CD8-positive, alpha-beta T cell (primary cell): ENCODE measurements at regions of chr6 and their contacts with region 1.

Region 1: DNA sequence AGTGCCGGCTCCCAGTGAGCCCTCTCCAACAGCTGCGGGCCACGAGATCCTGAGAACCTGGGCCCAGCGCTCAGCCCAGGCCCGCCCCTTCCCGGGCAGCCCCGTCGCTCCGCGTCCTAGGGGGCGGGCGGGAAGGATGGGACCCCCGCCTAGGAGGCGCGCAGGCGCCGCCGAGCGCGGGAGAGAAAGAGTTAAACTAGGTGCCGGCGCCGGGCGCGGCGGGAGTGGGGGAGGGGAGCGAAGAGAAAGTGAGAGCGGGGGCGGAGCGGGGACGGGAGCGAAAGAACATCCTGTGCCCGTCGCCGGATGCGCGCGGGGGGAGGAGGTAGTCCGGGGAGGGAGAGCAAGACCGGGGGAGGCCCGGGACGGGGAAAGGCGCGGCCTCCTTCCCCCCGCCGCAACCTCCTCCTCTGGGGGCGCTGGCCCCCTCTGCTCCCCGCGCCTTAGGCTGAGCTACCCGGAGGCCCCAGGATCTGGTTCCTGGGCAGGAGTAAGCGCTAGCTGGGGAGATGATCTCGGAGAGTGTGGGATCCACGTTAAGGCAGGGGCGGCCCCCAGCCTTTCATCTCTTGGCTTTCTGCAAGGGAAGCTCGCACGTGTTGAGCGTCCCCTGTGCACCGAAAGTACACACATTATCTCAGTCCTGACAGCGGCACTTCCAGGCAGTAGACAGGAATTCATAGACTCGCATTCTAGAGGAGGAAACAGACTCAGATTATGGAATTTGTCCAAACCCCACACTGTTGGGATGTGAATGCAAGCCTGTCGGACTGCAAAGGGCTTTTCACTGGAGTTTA is 4.9 kb upstream of the ARMC12 start:
- DNase-seq: peak; percentile 86 to 98 (median 95)
- ATAC-seq: peak; percentile 55
- H3K4me3 ChIP-seq: peak overlapping the region; percentile 70 to 91
- H3K4me3 Mint-ChIP-seq: peak overlapping the region; percentile 91
- H3K27ac ChIP-seq: peak overlapping the region; percentile 91 to 95
- H3K27ac Mint-ChIP-seq: peak overlapping the region; percentile 89
- H3K4me1 ChIP-seq: peaks cover 87% of the 10 kb centered on the region
- H3K4me1 Mint-ChIP-seq: peaks cover 80% of the 10 kb centered on the region
- H3K27me3 ChIP-seq: no peaks in the 10 kb centered on the region
- H3K27me3 Mint-ChIP-seq: no peaks in the 10 kb centered on the region
- CTCF ChIP-seq: peak; percentile 17

Region 2: DNA sequence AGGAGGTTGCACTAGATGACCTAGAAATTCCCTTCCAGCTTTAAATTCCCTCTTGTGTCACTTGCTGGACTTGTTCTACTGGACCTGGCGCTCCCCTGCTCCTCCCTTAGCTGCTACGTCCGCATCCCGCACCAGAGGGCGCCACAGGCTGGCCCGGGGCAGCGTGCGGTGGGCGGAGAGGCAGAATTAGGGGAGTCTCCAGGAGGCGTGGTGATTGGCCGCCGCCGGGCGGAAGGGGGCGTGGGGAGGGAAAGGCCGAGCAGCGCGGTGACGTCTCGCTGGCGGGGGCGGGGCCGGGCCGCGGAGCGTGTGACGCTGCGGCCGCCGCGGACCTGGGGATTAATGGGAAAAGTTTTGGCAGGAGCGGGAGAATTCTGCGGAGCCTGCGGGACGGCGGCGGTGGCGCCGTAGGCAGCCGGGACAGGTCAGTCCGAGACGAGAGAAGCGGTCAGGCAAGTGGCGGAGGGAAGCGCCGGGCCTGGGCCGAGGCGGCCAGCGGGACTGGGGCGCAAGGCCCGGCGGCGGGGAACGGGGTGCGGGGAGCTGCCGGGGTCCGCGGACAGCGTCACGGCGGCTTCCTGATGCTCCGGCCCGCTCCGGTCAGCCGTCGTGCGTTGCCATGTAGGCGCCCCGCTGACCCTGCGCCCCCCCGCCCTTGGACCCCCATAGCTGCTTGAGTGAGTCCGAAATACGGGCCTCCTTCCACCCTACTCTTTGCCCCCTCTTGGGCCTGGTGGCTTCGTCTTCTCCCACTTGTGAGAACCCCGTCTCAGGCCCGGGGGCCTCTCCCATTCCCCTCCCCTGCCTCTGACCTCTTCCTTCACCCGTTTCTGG is 389.5 kb before region 1 on chr6 and contains the start of gene PPARD:
- CTCF ChIA-PET with region 1: interaction called, 17 read pairs
- POLR2A ChIA-PET with region 1: no interaction called
- intact Hi-C with region 1: loop called (anchors 2 kb)
- DNase-seq: peak; percentile 93 to 99 (median 97)
- ATAC-seq: peak; percentile 99
- H3K4me3 ChIP-seq: peak within 1 kb of the TSS; percentile 52 to 57
- H3K4me3 Mint-ChIP-seq: peak within 1 kb of the TSS; percentile 87
- H3K27ac ChIP-seq: peak within 1 kb of the TSS; percentile 75 to 81
- H3K27ac Mint-ChIP-seq: peak within 1 kb of the TSS; percentile 94
- H3K4me1 ChIP-seq: peaks cover 43% of the 10 kb centered on the region
- H3K4me1 Mint-ChIP-seq: peaks cover 50% of the 10 kb centered on the region
- H3K27me3 ChIP-seq: no peaks in the 10 kb centered on the region
- H3K27me3 Mint-ChIP-seq: no peaks in the 10 kb centered on the region
- CTCF ChIP-seq: peak; percentile 90
- total RNA-seq, gene PPARD: 20.0 to 21.5 TPM

Region 3: DNA sequence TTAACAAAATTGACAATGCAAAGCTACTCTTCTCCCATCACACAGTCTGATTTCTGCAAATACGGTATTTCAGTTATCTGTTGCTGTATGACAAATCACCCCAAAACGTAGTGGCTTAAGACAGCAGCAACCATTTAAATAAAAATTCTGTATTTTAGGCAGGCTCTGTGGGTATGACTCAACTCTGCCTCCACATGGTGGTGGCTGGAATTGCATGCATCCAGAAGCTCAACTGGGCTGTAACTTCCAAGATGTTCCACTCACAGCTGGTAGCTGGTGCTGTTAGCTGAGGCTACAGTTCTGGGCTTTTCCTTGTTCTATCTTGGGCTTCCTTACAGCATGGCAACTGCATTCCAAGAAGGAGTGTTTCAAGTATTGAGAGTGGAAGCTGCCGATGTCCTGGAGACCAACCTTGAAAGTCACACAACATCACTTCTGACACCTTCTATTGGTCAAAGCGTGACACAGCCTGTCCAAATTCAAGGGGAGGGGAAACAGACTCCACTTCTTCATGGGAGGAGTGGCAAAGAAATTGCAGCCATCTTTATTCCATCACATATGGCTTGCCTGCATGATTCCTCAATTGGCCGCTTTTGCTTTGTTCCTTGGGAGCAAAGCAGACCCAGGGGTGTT is 179.5 kb before region 1 on chr6:
- CTCF ChIA-PET with region 1: interaction called, 12 read pairs
- POLR2A ChIA-PET with region 1: interaction called, 4 read pairs
- intact Hi-C with region 1: no loop called
- DNase-seq: peak; percentile 31 to 78 (median 61)
- ATAC-seq: peak; percentile 86
- H3K4me3 ChIP-seq: no peak overlapping the region
- H3K4me3 Mint-ChIP-seq: no peak overlapping the region
- H3K27ac ChIP-seq: no peak overlapping the region
- H3K27ac Mint-ChIP-seq: no peak overlapping the region
- H3K4me1 ChIP-seq: no peaks in the 10 kb centered on the region
- H3K4me1 Mint-ChIP-seq: peaks cover 4% of the 10 kb centered on the region
- H3K27me3 ChIP-seq: no peaks in the 10 kb centered on the region
- H3K27me3 Mint-ChIP-seq: peaks cover 2% of the 10 kb centered on the region
- CTCF ChIP-seq: peak; percentile 95

Region 4: GRCh38 chr6:35590622-35591066 is 141.3 kb before region 1 on chr6:
- CTCF ChIA-PET with region 1: interaction called, 152 read pairs
- POLR2A ChIA-PET with region 1: interaction called, 11 read pairs
- intact Hi-C with region 1: no loop called
- DNase-seq: no peak
- ATAC-seq: no peak
- H3K4me3 ChIP-seq: no peak overlapping the region
- H3K4me3 Mint-ChIP-seq: no peak overlapping the region
- H3K27ac ChIP-seq: peak overlapping the region in 1 of 2 experiments; percentile 46
- H3K27ac Mint-ChIP-seq: peak overlapping the region; percentile 94
- H3K4me1 ChIP-seq: peaks cover 86% of the 10 kb centered on the region
- H3K4me1 Mint-ChIP-seq: peaks cover 92% of the 10 kb centered on the region
- H3K27me3 ChIP-seq: no peaks in the 10 kb centered on the region
- H3K27me3 Mint-ChIP-seq: no peaks in the 10 kb centered on the region
- CTCF ChIP-seq: no peak

Region 5: GRCh38 chr6:35634316-35634715 is 97.6 kb before region 1 on chr6:
- CTCF ChIA-PET with region 1: interaction called, 341 read pairs
- POLR2A ChIA-PET with region 1: interaction called, 3 read pairs
- intact Hi-C with region 1: loop called in 1 of 2 experiments (anchors 2 kb)
- DNase-seq: no peak
- ATAC-seq: no peak
- H3K4me3 ChIP-seq: no peak overlapping the region
- H3K4me3 Mint-ChIP-seq: no peak overlapping the region
- H3K27ac ChIP-seq: no peak overlapping the region
- H3K27ac Mint-ChIP-seq: peak overlapping the region; percentile 85
- H3K4me1 ChIP-seq: no peaks in the 10 kb centered on the region
- H3K4me1 Mint-ChIP-seq: peaks cover 36% of the 10 kb centered on the region
- H3K27me3 ChIP-seq: no peaks in the 10 kb centered on the region
- H3K27me3 Mint-ChIP-seq: no peaks in the 10 kb centered on the region
- CTCF ChIP-seq: no peak

Region 6: DNA sequence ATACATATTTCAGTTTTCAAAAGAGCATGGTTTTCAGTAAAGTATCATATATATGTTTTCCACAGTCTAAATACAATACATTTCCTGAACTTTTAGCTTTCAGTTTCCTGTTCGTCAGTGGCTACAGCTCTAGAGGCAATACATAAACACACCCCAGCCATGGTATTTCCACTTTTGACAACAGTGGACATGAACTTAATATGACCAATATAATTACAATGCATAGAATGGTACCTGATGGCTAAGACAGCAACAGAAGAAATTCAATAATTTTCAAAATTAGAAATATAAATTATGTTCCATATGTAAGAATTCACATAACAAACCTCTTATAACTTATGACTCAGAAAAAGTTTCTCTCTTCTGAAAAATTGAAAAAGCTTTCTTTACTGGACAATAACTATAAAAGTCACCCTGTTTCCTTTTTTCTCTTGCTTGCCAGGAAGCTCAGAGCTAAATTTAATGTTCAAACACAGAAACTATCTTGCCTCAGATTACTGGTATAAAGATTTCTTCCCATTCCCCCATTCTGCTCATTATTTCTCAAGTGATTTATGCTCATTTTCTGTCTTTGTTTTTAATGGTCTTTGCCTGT is 62.4 kb before region 1 on chr6:
- CTCF ChIA-PET with region 1: interaction called, 21 read pairs
- POLR2A ChIA-PET with region 1: interaction called, 9 read pairs
- intact Hi-C with region 1: loop called in 1 of 2 experiments (anchors 5 kb)
- DNase-seq: peak in 2 of 9 experiments; percentile 37 to 64
- ATAC-seq: peak; percentile 63
- H3K4me3 ChIP-seq: peak overlapping the region; percentile 21 to 26
- H3K4me3 Mint-ChIP-seq: peak overlapping the region; percentile 73
- H3K27ac ChIP-seq: peak overlapping the region; percentile 17 to 62
- H3K27ac Mint-ChIP-seq: peak overlapping the region; percentile 89
- H3K4me1 ChIP-seq: peaks cover 73% of the 10 kb centered on the region
- H3K4me1 Mint-ChIP-seq: peaks cover 50% of the 10 kb centered on the region
- H3K27me3 ChIP-seq: no peaks in the 10 kb centered on the region
- H3K27me3 Mint-ChIP-seq: no peaks in the 10 kb centered on the region
- CTCF ChIP-seq: no peak

Region 7: DNA sequence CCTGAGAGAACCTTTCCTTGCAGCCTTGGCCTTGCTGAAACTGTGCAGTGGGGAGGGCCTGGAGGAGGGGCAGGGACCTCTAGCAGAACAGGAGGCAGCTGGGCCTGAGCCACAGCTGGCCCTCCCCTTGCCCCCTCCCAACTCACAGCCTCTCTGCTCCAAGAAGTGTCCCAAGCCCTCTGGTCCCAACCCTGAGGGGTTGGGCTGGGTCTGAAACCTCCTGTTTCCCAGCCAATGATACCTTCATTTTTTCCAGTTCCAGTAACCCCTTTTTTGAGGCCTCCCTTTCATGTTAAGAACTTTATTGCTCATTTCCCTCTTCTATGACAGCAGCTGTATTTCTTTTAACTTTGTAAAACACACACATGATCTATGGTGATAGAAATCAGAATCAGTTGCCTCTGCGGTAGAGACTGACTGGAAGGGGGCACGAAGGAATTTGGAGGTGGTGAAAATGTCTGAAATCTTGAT is 13.0 kb before region 1 on chr6:
- CTCF ChIA-PET with region 1: interaction called, 65 read pairs
- POLR2A ChIA-PET with region 1: interaction called, 4 read pairs
- intact Hi-C with region 1: no loop called
- DNase-seq: no peak
- ATAC-seq: peak; percentile 69
- H3K4me3 ChIP-seq: peak overlapping the region in 1 of 2 experiments; percentile 5
- H3K4me3 Mint-ChIP-seq: peak overlapping the region; percentile 40
- H3K27ac ChIP-seq: no peak overlapping the region
- H3K27ac Mint-ChIP-seq: peak overlapping the region; percentile 88
- H3K4me1 ChIP-seq: peaks cover 46% of the 10 kb centered on the region
- H3K4me1 Mint-ChIP-seq: peaks cover 67% of the 10 kb centered on the region
- H3K27me3 ChIP-seq: no peaks in the 10 kb centered on the region
- H3K27me3 Mint-ChIP-seq: no peaks in the 10 kb centered on the region
- CTCF ChIP-seq: no peak